ENCODE measurements at regions of chr11 and their contacts with region 1.

Region 1: DNA sequence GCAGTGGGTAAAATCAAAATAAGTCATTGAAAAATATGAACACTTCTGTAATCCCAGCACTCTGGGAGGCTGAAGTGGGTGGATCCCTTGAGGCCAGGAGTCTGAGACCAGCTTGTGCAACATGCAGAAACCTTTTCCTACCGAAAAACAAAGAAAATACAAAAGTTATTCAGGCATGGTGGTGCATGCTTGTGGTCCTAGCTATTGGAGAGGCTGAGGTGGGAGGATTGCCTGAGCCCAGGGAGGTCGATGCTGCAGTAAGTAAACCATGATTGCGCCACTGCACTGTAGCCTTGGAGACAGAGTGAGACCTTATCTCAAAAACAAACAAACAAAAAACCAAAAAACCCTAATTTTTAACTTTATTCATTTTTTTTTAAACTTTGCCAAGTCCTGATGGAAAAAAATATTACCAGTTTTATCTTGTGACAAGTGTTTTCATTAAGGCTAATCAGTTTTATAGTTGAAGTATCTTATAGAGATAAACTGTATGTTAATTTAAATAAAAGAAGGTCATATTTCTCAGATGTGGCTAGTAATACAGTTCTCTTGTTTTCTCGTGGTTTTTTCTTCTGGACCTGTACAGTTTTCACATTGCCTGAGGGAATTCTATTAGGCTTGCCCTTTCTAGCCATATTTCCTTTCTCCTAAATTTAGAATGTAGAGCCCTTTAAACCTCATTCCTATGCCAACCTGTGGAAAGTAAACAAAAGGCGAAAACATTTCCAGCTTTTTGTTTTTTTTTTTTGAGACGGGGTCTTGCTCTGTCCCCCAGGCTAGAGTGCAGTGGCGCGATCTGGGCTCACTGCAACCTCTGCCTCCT is 9.4 kb downstream of the HIPK3 start:
- DNase-seq: peak; percentile 58
- ATAC-seq: peak; percentile 54; the same call in 1 of the 2 replicates
- H3K4me3 ChIP-seq: no peak overlapping the region
- H3K27ac ChIP-seq: no peak overlapping the region
- H3K4me1 ChIP-seq: peaks cover 10% of the 10 kb centered on the region
- H3K27me3 ChIP-seq: no peaks in the 10 kb centered on the region
- CTCF ChIP-seq: no peak
- POLR2A ChIP-seq: no peak
- RAD21 ChIP-seq: no peak

Region 2: GRCh38 chr11:32939046-32939445 is 327.6 kb before region 1 on chr11:
- CTCF ChIA-PET with region 1: no interaction called
- POLR2A ChIA-PET with region 1: interaction called, 14 read pairs
- dilution Hi-C with region 1: no loop called
- in situ Hi-C with region 1: no loop called
- intact Hi-C with region 1: no loop called
- DNase-seq: no peak
- ATAC-seq: no peak
- H3K4me3 ChIP-seq: no peak overlapping the region
- H3K27ac ChIP-seq: no peak overlapping the region
- H3K4me1 ChIP-seq: no peaks in the 10 kb centered on the region
- H3K27me3 ChIP-seq: no peaks in the 10 kb centered on the region
- CTCF ChIP-seq: no peak
- POLR2A ChIP-seq: no peak
- RAD21 ChIP-seq: no peak

Region 3: DNA sequence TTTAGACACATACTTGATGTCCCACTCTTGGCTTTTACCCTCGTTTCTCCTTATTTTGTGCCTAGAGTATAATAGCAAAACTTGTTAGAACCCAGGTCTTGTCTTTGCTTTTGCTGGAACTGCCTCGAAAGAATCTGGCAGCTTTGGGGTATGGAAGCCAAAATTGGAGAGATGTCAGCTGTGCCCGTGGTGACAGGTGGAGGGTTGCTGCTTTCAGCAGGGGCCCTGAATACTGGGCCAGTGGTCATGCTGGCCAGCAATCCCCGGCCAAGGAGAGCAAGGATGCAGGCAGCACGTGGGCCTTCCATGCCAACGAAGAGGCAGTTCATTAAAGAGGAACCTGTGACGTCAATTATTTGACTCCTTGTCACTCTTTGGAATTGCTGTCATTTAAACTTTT is 171.7 kb after region 1 on chr11:
- CTCF ChIA-PET with region 1: no interaction called
- POLR2A ChIA-PET with region 1: no interaction called
- dilution Hi-C with region 1: no loop called
- in situ Hi-C with region 1: no loop called
- intact Hi-C with region 1: no loop called
- DNase-seq: no peak
- ATAC-seq: no peak
- H3K4me3 ChIP-seq: no peak overlapping the region
- H3K27ac ChIP-seq: no peak overlapping the region
- H3K4me1 ChIP-seq: no peaks in the 10 kb centered on the region
- H3K27me3 ChIP-seq: no peaks in the 10 kb centered on the region
- CTCF ChIP-seq: no peak
- POLR2A ChIP-seq: no peak
- RAD21 ChIP-seq: no peak

Measured in IMR-90 (cell line).